ENCODE measurements at regions of chr16 and their contacts with region 1.

Region 1: DNA sequence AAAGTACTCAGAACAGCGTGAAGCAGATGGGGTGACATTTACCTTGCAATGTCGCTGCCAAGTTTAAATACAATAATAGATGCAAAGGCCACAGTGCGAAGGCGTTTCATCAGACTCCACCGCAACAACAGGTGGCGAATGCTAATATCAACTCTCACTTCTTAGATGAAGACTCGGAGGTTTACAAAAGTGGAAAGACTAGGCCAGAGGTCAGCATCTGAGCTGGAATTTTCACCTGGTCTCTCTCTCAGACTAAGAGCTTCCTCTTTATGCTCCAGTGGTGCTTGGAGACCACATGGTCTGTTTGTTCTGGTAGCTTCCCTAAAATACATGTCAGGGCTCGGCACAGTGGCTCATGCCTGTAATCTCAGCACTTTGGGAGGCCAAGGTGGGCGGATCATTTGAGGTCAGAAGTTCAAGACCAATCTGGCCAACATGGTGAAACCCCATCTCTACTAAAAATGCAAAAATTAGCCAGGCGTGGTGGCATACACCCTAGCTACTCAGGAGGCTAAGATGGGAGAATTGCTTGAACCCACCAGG is 169.1 kb downstream of the XYLT1 start:
- DNase-seq: peak; percentile 98
- ATAC-seq: peak; percentile 91
- H3K4me3 ChIP-seq: no peak overlapping the region
- H3K27ac ChIP-seq: no peak overlapping the region; the same call in none of the 2 replicates
- H3K4me1 ChIP-seq: peaks cover 44% of the 10 kb centered on the region
- H3K27me3 ChIP-seq: no peaks in the 10 kb centered on the region
- CTCF ChIP-seq: no peak
- EP300 ChIP-seq: peak; percentile 87 to 97
- POLR2A ChIP-seq: no peak
- RAD21 ChIP-seq: peak; percentile 5; the same call in 1 of the 2 replicates

Region 2: GRCh38 chr16:17258848-17259713 is 42.6 kb before region 1 on chr16:
- CTCF ChIA-PET with region 1: interaction called, 36 read pairs
- POLR2A ChIA-PET with region 1: interaction called, 3 read pairs
- RAD21 ChIA-PET with region 1: interaction called, 70 read pairs
- SMC1A ChIA-PET with region 1: interaction called, 77 read pairs
- in situ Hi-C with region 1: no loop called
- intact Hi-C with region 1: loop called (anchors 2 kb)
- DNase-seq: peak; percentile 79
- ATAC-seq: peak; percentile 88
- H3K4me3 ChIP-seq: peak overlapping the region; percentile 47
- H3K27ac ChIP-seq: peak overlapping the region; percentile 93
- H3K4me1 ChIP-seq: peaks cover 33% of the 10 kb centered on the region
- H3K27me3 ChIP-seq: no peaks in the 10 kb centered on the region
- CTCF ChIP-seq: peak; percentile 64 to 75 (median 68)
- EP300 ChIP-seq: peak; percentile 22 to 83; a peak in 2 of 4 replicates
- POLR2A ChIP-seq: peak; percentile 62
- RAD21 ChIP-seq: peak; percentile 68

Region 3: DNA sequence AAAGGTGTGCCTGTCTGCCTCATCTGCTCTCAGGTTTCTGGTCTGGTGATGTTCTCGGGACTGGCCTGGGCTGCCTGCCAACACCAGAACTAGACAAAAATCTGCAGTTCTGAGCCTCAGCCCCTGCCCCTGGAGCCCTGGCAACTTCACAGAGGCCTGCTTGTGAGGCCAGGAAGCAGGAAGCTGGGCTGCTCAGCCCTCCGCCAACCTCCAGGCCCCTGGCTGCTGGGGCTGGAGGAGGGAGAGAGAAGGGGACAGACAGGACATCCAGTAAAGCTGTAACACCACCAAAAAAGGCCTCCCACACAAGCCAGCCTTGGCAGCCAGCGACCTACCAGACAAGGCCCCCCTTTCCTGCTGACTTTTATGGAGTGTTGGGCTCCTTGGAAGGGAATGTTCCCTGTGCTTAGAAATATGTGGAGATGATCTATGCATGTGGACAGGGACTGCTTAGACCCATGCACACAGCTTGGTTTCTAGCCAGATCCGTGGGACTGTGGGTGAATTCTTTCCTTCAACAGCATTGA is 11.5 kb after region 1 on chr16:
- CTCF ChIA-PET with region 1: interaction called, 7 read pairs
- POLR2A ChIA-PET with region 1: interaction called, 3 read pairs
- RAD21 ChIA-PET with region 1: interaction called, 5 read pairs
- SMC1A ChIA-PET with region 1: interaction called, 88 read pairs
- in situ Hi-C with region 1: no loop called
- intact Hi-C with region 1: no loop called
- DNase-seq: no peak
- ATAC-seq: peak; percentile 18; the same call in 2 of the 3 replicates
- H3K4me3 ChIP-seq: no peak overlapping the region
- H3K27ac ChIP-seq: no peak overlapping the region
- H3K4me1 ChIP-seq: peaks cover 10% of the 10 kb centered on the region
- H3K27me3 ChIP-seq: no peaks in the 10 kb centered on the region
- CTCF ChIP-seq: no peak
- EP300 ChIP-seq: no peak
- POLR2A ChIP-seq: no peak
- RAD21 ChIP-seq: no peak

Region 4: DNA sequence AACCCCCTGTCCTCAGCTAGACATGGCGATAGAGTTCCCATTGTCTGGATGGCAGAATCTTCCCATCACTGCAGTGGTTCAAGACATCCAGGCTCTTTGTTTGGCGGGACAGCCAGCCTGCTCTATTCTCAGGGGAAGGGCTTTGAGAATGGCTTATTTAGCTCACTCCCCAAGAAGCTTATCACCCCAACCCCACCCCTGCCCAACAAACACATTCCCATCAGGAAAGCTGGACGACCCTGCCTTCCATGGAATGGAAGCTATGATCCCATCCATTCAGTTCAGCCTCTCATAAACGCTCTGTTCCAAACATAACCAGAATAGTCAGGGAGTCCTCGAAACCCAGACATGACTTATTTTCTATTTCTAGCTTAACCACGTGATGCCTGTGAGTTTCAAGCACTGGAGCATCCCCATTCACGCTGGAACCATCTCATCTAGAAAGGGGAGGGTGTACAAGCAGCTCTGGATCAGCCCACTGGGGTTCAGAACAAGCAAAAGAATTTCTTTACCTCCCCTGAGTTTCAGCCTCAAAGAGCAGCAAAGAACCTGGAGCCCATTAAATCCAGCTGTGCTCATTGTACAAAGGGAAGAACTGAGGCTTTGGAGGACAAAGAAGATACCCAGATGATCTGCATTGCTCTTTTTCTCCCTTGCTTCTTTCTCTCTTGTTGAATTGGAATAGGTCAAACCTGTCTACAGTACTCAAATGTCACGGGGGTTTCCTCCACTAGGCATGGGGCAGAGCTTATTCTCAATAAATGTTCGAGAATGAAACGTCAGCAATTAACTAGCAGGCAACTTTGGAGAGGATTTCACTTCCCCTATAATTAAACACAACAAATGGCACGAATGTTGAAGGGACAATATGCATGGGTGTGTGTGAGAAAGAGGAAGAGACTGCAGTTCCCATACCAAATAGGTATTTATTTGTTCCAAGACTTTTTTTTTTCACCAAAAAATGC is 76.0 kb after region 1 on chr16:
- CTCF ChIA-PET with region 1: interaction called, 22 read pairs
- POLR2A ChIA-PET with region 1: interaction called, 11 read pairs
- RAD21 ChIA-PET with region 1: interaction called, 59 read pairs
- SMC1A ChIA-PET with region 1: interaction called, 163 read pairs
- in situ Hi-C with region 1: no loop called
- intact Hi-C with region 1: loop called (anchors 2 kb)
- DNase-seq: peak; percentile 80
- ATAC-seq: peak; percentile 90
- H3K4me3 ChIP-seq: 0 out of 2 replicates have a peak overlapping the region, but pooled peaks have one; percentile 43
- H3K27ac ChIP-seq: peak overlapping the region; percentile 72
- H3K4me1 ChIP-seq: peaks cover 35% of the 10 kb centered on the region
- H3K27me3 ChIP-seq: no peaks in the 10 kb centered on the region
- CTCF ChIP-seq: no peak
- EP300 ChIP-seq: peak; percentile 84 to 91; a peak in 2 of 4 replicates
- POLR2A ChIP-seq: no peak
- RAD21 ChIP-seq: peak; percentile 21; the same call in 1 of the 2 replicates

Region 5: GRCh38 chr16:17451843-17452242 is 150.2 kb after region 1 on chr16:
- CTCF ChIA-PET with region 1: no interaction called
- POLR2A ChIA-PET with region 1: no interaction called
- RAD21 ChIA-PET with region 1: no interaction called
- SMC1A ChIA-PET with region 1: interaction called, 4 read pairs
- in situ Hi-C with region 1: no loop called
- intact Hi-C with region 1: loop called (anchors 5 kb)
- DNase-seq: no peak
- ATAC-seq: peak; percentile 80
- H3K4me3 ChIP-seq: no peak overlapping the region
- H3K27ac ChIP-seq: no peak overlapping the region
- H3K4me1 ChIP-seq: peaks cover 12% of the 10 kb centered on the region
- H3K27me3 ChIP-seq: no peaks in the 10 kb centered on the region
- CTCF ChIP-seq: no peak
- EP300 ChIP-seq: no peak
- POLR2A ChIP-seq: no peak
- RAD21 ChIP-seq: no peak

Measured in GM12878 (cell line).